ENCODE measurements at regions of chr2 and their contacts with region 1.

Region 1: GRCh38 chr2:219294356-219295351 is 14.5 kb downstream of the PTPRN start:
- DNase-seq: peak; percentile 91 to 95
- H3K4me3 ChIP-seq: peak overlapping the region; percentile 57
- H3K4me3 Mint-ChIP-seq: peak overlapping the region; percentile 71
- H3K27ac Mint-ChIP-seq: peak overlapping the region; percentile 22
- H3K4me1 ChIP-seq: peaks cover 4% of the 10 kb centered on the region; the same call in 1 of the 2 replicates
- H3K4me1 Mint-ChIP-seq: no peaks in the 10 kb centered on the region
- H3K27me3 ChIP-seq: no peaks in the 10 kb centered on the region; the same call in 1 of the 2 replicates
- H3K27me3 Mint-ChIP-seq: no peaks in the 10 kb centered on the region
- CTCF ChIP-seq: peak; percentile 98 to 99

Region 2: GRCh38 chr2:219057709-219058540 is 236.7 kb before region 1 on chr2:
- CTCF ChIA-PET with region 1: interaction called, 5 read pairs
- POLR2A ChIA-PET with region 1: no interaction called
- intact Hi-C with region 1: loop called (anchors 5 kb)
- DNase-seq: peak; percentile 82 to 89
- H3K4me3 ChIP-seq: peak overlapping the region; percentile 99
- H3K4me3 Mint-ChIP-seq: peak overlapping the region; percentile 92
- H3K27ac Mint-ChIP-seq: no peak overlapping the region
- H3K4me1 ChIP-seq: peaks cover 11% of the 10 kb centered on the region
- H3K4me1 Mint-ChIP-seq: peaks cover 7% of the 10 kb centered on the region
- H3K27me3 ChIP-seq: no peaks in the 10 kb centered on the region
- H3K27me3 Mint-ChIP-seq: peaks cover 3% of the 10 kb centered on the region
- CTCF ChIP-seq: peak; percentile 91 to 95

Region 3: GRCh38 chr2:219171231-219171651 is 123.4 kb before region 1 on chr2:
- CTCF ChIA-PET with region 1: interaction called, 11 read pairs
- POLR2A ChIA-PET with region 1: interaction called, 3 read pairs
- intact Hi-C with region 1: loop called (anchors 1 kb)
- DNase-seq: peak; percentile 74 to 79
- H3K4me3 ChIP-seq: no peak overlapping the region
- H3K4me3 Mint-ChIP-seq: no peak overlapping the region
- H3K27ac Mint-ChIP-seq: peak overlapping the region; percentile 64
- H3K4me1 ChIP-seq: peaks cover 21% of the 10 kb centered on the region
- H3K4me1 Mint-ChIP-seq: peaks cover 28% of the 10 kb centered on the region
- H3K27me3 ChIP-seq: no peaks in the 10 kb centered on the region
- H3K27me3 Mint-ChIP-seq: no peaks in the 10 kb centered on the region
- CTCF ChIP-seq: peak; percentile 64 to 79

Region 4: GRCh38 chr2:219206442-219207253 is 88.0 kb before region 1 on chr2 and contains the start of gene ZFAND2B:
- CTCF ChIA-PET with region 1: interaction called, 11 read pairs
- POLR2A ChIA-PET with region 1: interaction called, 7 read pairs
- intact Hi-C with region 1: no loop called
- DNase-seq: peak; percentile 93 to 98
- H3K4me3 ChIP-seq: peak within 1 kb of the TSS; percentile 78
- H3K4me3 Mint-ChIP-seq: peak within 1 kb of the TSS; percentile 81
- H3K27ac Mint-ChIP-seq: peak within 1 kb of the TSS; percentile 84
- H3K4me1 ChIP-seq: peaks cover 8% of the 10 kb centered on the region
- H3K4me1 Mint-ChIP-seq: peaks cover 5% of the 10 kb centered on the region
- H3K27me3 ChIP-seq: no peaks in the 10 kb centered on the region
- H3K27me3 Mint-ChIP-seq: no peaks in the 10 kb centered on the region
- CTCF ChIP-seq: no peak
- total RNA-seq, gene ZFAND2B: 37.3 and 41.8 TPM in 2 replicates

Region 5: DNA sequence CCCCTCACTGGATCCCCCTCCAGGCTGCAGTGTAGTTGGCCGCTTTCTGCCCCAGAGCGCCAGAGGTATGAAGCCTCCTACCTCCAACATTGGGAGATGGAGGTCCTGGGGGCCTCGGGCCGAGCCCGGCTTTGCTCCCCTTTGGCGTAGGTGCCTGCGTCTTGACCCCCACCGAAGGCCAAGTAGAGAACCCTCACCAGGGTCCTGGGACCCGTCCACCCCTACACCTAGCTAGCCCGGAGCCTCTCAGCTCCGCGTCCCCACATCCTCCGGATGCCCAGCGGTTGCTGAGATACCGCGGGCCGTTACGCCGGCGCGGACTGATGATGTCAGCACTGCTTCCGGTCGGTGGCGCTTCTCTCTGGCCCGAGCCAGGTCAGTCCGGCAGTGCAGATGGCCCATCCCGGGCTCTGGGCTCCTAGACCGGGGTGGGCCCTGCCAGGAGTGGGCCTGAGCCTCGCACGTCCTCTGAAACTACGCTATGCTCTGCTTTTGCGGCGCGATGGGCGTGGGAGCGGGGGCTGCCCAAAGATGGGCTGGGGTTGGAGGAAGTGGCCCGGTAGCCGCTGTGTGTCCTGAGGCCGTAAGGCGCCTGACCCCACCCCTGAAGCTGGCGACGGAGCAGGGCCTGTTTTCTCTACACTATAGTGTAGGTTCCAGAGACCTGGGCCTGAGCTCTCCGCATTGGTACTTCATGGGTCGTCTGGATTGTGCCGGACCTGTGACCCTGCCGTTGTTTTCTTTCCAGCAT is 49.3 kb before region 1 on chr2 and contains the starts of genes GLB1L and STK16:
- CTCF ChIA-PET with region 1: interaction called, 25 read pairs
- POLR2A ChIA-PET with region 1: interaction called, 4 read pairs
- intact Hi-C with region 1: loop called (anchors 2 kb)
- DNase-seq: peak; percentile 94
- H3K4me3 ChIP-seq: peak within 1 kb of the TSS; percentile 73
- H3K4me3 Mint-ChIP-seq: peak within 1 kb of the TSS; percentile 82
- H3K27ac Mint-ChIP-seq: peak within 1 kb of the TSS; percentile 90
- H3K4me1 ChIP-seq: peaks cover 33% of the 10 kb centered on the region
- H3K4me1 Mint-ChIP-seq: peaks cover 23% of the 10 kb centered on the region
- H3K27me3 ChIP-seq: no peaks in the 10 kb centered on the region
- H3K27me3 Mint-ChIP-seq: no peaks in the 10 kb centered on the region
- CTCF ChIP-seq: no peak
- total RNA-seq, gene GLB1L: 3.3 and 4.3 TPM in 2 replicates
- total RNA-seq, gene STK16: 26.1 and 26.6 TPM in 2 replicates

Region 6: GRCh38 chr2:219278655-219279516 is 15.8 kb before region 1 on chr2 and contains the start of gene DNAJB2:
- CTCF ChIA-PET with region 1: interaction called, 92 read pairs
- POLR2A ChIA-PET with region 1: interaction called, 10 read pairs
- intact Hi-C with region 1: loop called (anchors 1 kb)
- DNase-seq: peak; percentile 98
- H3K4me3 ChIP-seq: peak within 1 kb of the TSS; percentile 85
- H3K4me3 Mint-ChIP-seq: peak within 1 kb of the TSS; percentile 98
- H3K27ac Mint-ChIP-seq: peak within 1 kb of the TSS; percentile 98
- H3K4me1 ChIP-seq: peaks cover 36% of the 10 kb centered on the region
- H3K4me1 Mint-ChIP-seq: peaks cover 13% of the 10 kb centered on the region
- H3K27me3 ChIP-seq: no peaks in the 10 kb centered on the region
- H3K27me3 Mint-ChIP-seq: no peaks in the 10 kb centered on the region
- CTCF ChIP-seq: no peak
- total RNA-seq, gene DNAJB2: 60.6 and 61.2 TPM in 2 replicates

Region 7: DNA sequence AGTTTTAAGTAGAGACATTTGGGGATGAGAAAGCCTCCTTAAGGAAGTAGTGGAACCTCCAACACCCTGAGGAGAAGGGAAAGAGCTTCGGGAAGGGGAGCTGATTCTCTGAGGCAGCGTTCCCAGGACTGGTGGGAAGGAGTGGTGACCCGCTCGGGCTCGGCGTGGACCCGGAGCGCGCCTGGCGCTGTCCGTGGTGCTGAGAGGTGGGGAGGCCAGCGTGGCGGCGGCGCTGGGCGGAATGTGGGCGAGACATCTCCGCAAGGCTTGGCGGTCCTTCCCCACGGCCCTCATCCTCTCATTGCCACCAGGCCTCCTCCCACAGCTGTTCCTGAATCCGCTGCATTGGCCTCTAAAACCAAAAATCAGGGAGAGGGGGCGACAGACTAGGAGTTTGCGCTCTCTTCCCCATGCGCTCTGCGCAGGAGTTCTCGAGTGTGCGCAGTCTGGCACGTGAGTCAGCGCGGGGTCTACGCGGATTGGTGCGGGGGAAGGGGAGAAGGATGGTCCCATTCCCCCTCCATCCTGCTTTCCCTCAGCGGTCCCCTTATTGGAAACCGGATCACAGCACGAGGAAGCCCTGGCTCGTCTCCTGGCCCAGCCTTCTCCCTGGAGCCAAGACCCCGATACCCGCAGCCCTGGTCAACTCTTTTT is 37.0 kb after region 1 on chr2:
- CTCF ChIA-PET with region 1: no interaction called
- POLR2A ChIA-PET with region 1: no interaction called
- intact Hi-C with region 1: no loop called
- DNase-seq: peak; percentile 44 to 78
- H3K4me3 ChIP-seq: no peak overlapping the region
- H3K4me3 Mint-ChIP-seq: no peak overlapping the region
- H3K27ac Mint-ChIP-seq: no peak overlapping the region
- H3K4me1 ChIP-seq: no peaks in the 10 kb centered on the region
- H3K4me1 Mint-ChIP-seq: no peaks in the 10 kb centered on the region
- H3K27me3 ChIP-seq: no peaks in the 10 kb centered on the region; the same call in none of the 2 replicates
- H3K27me3 Mint-ChIP-seq: peaks cover 21% of the 10 kb centered on the region
- CTCF ChIP-seq: no peak

Region 8: DNA sequence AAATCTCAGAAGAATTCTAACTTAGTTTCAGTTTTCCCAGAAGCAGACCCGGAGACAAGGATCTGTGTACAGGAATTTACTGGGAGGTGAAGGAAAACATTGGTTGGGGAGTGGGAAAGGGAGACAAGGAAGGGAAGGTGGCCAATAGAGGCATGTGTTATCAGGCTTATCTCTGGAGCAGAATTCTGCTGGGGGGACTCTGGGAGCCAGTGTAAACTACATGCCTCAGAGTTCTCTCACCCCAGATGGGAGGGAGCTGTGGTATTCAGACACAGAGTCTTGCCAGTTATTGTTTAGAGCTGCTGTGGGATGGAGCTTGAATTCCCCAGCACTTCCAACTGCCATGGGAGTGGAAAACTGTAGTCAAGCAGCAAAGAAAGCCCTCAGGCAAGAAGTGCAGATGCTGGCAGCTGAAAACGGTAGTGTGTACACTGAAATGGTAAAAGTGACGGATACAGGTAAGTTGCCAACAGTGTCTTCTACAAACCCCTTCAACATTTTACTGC is 74.1 kb after region 1 on chr2:
- CTCF ChIA-PET with region 1: interaction called, 3 read pairs
- POLR2A ChIA-PET with region 1: no interaction called
- intact Hi-C with region 1: loop called (anchors 2 kb)
- DNase-seq: peak; percentile 54 to 86
- H3K4me3 ChIP-seq: no peak overlapping the region
- H3K4me3 Mint-ChIP-seq: peak overlapping the region; percentile 14
- H3K27ac Mint-ChIP-seq: peak overlapping the region; percentile 25
- H3K4me1 ChIP-seq: peaks cover 21% of the 10 kb centered on the region
- H3K4me1 Mint-ChIP-seq: peaks cover 20% of the 10 kb centered on the region
- H3K27me3 ChIP-seq: no peaks in the 10 kb centered on the region
- H3K27me3 Mint-ChIP-seq: no peaks in the 10 kb centered on the region
- CTCF ChIP-seq: no peak

Region 9: GRCh38 chr2:219944866-219945265 is 650.2 kb after region 1 on chr2:
- CTCF ChIA-PET with region 1: no interaction called
- POLR2A ChIA-PET with region 1: no interaction called
- intact Hi-C with region 1: no loop called
- DNase-seq: no peak
- H3K4me3 ChIP-seq: no peak overlapping the region
- H3K4me3 Mint-ChIP-seq: no peak overlapping the region
- H3K27ac Mint-ChIP-seq: no peak overlapping the region
- H3K4me1 ChIP-seq: no peaks in the 10 kb centered on the region
- H3K4me1 Mint-ChIP-seq: no peaks in the 10 kb centered on the region
- H3K27me3 ChIP-seq: no peaks in the 10 kb centered on the region; the same call in 1 of the 2 replicates
- H3K27me3 Mint-ChIP-seq: peaks cover 5% of the 10 kb centered on the region
- CTCF ChIP-seq: no peak

Measured in Caco-2 (cell line).